A549 (cell line): ENCODE measurements at regions of chr19 and their contacts with region 1.

Region 1: GRCh38 chr19:38402967-38403861 is at the start of gene FAM98C:
- DNase-seq: peak; percentile 99 to 100
- ATAC-seq: peak; percentile 93 to 98
- H3K4me3 ChIP-seq: peak within 1 kb of the TSS; percentile 66
- H3K27ac ChIP-seq: peak within 1 kb of the TSS; percentile 80 to 89
- H3K4me1 ChIP-seq: peaks cover 10% of the 10 kb centered on the region
- CTCF ChIP-seq: peak; percentile 100
- EP300 ChIP-seq: no peak
- POLR2A ChIP-seq: peak; percentile 72
- RAD21 ChIP-seq: peak; percentile 96 to 100
- polyA plus RNA-seq, gene FAM98C: 12.8 and 13.8 TPM in 2 replicates

Region 2: GRCh38 chr19:38162094-38162493 is 241.1 kb before region 1 on chr19:
- CTCF ChIA-PET with region 1: no interaction called
- POLR2A ChIA-PET with region 1: no interaction called
- DNase-seq: no peak
- ATAC-seq: no peak
- H3K4me3 ChIP-seq: no peak overlapping the region
- H3K27ac ChIP-seq: no peak overlapping the region
- H3K4me1 ChIP-seq: no peaks in the 10 kb centered on the region
- CTCF ChIP-seq: no peak
- EP300 ChIP-seq: no peak
- POLR2A ChIP-seq: no peak
- RAD21 ChIP-seq: no peak

Region 3: GRCh38 chr19:38216785-38217641 is 186.2 kb before region 1 on chr19:
- CTCF ChIA-PET with region 1: no interaction called
- POLR2A ChIA-PET with region 1: no interaction called
- DNase-seq: no peak
- ATAC-seq: 0 out of 6 replicates have a peak, but pooled peaks of 1 of the 2 experiments have one; percentile 1
- H3K4me3 ChIP-seq: no peak overlapping the region
- H3K27ac ChIP-seq: no peak overlapping the region
- H3K4me1 ChIP-seq: peaks cover 3% of the 10 kb centered on the region; the same call in 1 of the 3 replicates
- CTCF ChIP-seq: no peak
- EP300 ChIP-seq: no peak
- POLR2A ChIP-seq: no peak
- RAD21 ChIP-seq: no peak

Region 4: DNA sequence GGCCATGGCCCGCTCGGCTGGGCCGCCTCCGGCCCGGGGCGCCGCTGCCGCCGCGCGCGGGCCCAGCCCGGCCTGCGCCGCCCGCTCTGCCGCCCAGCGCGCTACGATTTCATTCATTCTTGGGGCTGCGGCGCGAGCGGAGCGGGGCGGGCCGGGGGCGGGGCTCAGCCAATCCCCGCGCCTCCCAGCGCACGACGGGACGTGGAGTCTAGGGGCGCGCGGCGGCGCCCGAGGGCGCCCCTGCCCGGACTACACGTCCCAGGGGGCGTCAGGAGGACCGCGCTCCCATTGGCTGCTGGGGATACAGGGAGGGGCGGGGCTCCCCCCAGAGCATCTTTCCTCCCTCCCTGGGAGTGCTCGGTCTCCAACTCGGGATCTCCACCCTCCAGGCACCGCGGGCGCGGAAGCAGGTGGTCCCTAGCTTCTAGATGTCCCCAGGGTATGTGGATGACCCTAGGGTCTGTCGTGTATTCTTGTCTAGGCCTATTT is 173.6 kb before region 1 on chr19:
- CTCF ChIA-PET with region 1: interaction called, 12 read pairs
- POLR2A ChIA-PET with region 1: no interaction called
- DNase-seq: peak; percentile 89 to 93
- ATAC-seq: peak; percentile 49 to 79
- H3K4me3 ChIP-seq: peak overlapping the region; percentile 52
- H3K27ac ChIP-seq: peak overlapping the region in 1 of 2 experiments; percentile 67; a peak in 3 of 6 replicates
- H3K4me1 ChIP-seq: peaks cover 25% of the 10 kb centered on the region
- CTCF ChIP-seq: no peak
- EP300 ChIP-seq: no peak
- POLR2A ChIP-seq: no peak
- RAD21 ChIP-seq: no peak

Region 5: DNA sequence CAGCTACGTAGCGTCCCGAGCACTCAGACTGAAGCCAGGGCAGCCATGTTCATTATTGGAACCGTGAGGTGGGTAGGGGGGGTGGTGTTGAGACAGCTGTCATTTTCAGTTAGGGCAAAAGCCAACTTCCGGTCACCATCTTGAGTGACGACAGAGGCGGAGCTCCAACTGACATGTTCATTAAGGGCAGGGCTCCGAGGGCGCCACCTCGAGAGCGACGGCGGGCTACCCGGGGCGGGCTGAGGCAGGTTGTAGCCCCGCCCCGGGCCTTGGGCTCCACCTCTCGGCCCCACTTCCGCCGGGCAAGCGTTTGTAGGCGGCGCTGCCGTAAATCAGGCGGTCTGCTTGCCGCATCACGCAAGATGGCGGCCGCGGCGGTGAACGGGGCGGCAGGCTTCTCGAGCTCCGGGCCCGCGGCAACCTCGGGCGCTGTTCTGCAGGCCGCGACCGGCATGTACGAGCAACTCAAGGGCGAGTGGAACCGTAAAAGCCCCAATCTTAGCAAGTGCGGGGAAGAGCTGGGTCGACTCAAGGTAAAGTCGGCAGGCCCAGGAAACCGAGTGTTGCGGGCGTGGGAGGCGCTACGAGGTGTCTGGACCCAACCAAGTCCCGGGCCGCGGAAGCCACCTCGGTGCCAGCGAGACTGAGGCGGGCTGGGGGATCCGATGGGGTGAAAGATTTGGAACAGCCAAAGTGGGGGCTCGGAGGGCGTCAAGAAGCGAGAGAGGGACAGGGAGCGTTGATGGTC is 28.6 kb before region 1 on chr19 and contains the start of gene PSMD8:
- CTCF ChIA-PET with region 1: interaction called, 23 read pairs
- POLR2A ChIA-PET with region 1: interaction called, 11 read pairs
- DNase-seq: peak; percentile 100
- ATAC-seq: peak; percentile 91 to 97
- H3K4me3 ChIP-seq: peak within 1 kb of the TSS; percentile 78
- H3K27ac ChIP-seq: peak within 1 kb of the TSS; percentile 88 to 91
- H3K4me1 ChIP-seq: peaks cover 17% of the 10 kb centered on the region
- CTCF ChIP-seq: peak; percentile 40
- EP300 ChIP-seq: no peak
- POLR2A ChIP-seq: peak; percentile 100
- RAD21 ChIP-seq: peak in 1 of 2 experiments; percentile 35; a peak in 3 of 5 replicates
- polyA plus RNA-seq, gene PSMD8: 437 and 469 TPM in 2 replicates

Region 6: GRCh38 chr19:38470788-38471480 is 67.7 kb after region 1 on chr19:
- CTCF ChIA-PET with region 1: interaction called, 16 read pairs
- POLR2A ChIA-PET with region 1: no interaction called
- DNase-seq: no peak
- ATAC-seq: peak in 1 of 2 experiments; percentile 14; a peak in 2 of 6 replicates
- H3K4me3 ChIP-seq: no peak overlapping the region
- H3K27ac ChIP-seq: no peak overlapping the region
- H3K4me1 ChIP-seq: no peaks in the 10 kb centered on the region
- CTCF ChIP-seq: no peak
- EP300 ChIP-seq: no peak
- POLR2A ChIP-seq: no peak
- RAD21 ChIP-seq: no peak

Region 7: DNA sequence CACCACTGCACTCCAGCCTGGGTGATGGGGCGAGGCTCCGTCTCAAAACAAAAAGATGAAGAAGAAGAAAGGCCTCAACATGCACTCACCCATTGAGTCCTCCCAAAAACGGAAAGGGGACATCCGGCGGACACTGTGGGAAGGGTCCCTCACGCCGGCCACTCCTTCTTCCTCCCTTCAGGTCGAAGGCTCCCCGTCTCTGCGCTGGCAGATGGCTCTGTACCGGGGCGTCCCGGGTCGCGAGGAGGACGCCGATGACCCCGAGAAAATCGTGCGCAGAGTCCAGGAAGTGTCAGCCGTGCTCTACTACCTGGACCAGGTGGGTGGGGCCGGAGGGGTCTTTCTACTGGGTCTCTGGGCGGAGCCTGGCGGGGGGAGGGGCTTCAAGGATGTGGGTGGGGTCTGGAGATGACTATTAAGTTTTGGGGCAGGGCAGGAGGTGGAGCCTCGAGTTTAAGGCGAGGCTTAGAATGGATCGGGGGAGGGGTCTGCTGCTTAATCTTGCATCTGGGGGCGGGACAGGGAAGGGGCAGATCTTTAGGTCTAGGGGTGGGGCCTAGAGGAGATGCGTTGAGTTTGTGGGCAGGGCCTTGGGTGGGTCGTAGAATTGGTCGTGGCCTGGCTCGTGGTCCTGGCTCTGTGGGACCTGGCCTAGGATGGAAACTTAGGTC is 124.4 kb after region 1 on chr19:
- CTCF ChIA-PET with region 1: interaction called, 10 read pairs
- POLR2A ChIA-PET with region 1: no interaction called
- DNase-seq: peak in 1 of 2 experiments; percentile 55
- ATAC-seq: peak in 1 of 2 experiments; percentile 12; a peak in 3 of 6 replicates
- H3K4me3 ChIP-seq: no peak overlapping the region
- H3K27ac ChIP-seq: peak overlapping the region in 1 of 2 experiments; percentile 0; a peak in 1 of 6 replicates
- H3K4me1 ChIP-seq: peaks cover 5% of the 10 kb centered on the region; the same call in 2 of the 3 replicates
- CTCF ChIP-seq: no peak
- EP300 ChIP-seq: no peak
- POLR2A ChIP-seq: no peak
- RAD21 ChIP-seq: no peak

Region 8: GRCh38 chr19:38626401-38626800 is 223.2 kb after region 1 on chr19:
- CTCF ChIA-PET with region 1: interaction called, 12 read pairs
- POLR2A ChIA-PET with region 1: no interaction called
- DNase-seq: no peak
- ATAC-seq: no peak
- H3K4me3 ChIP-seq: no peak overlapping the region
- H3K27ac ChIP-seq: no peak overlapping the region
- H3K4me1 ChIP-seq: peaks cover 23% of the 10 kb centered on the region
- CTCF ChIP-seq: no peak
- EP300 ChIP-seq: no peak
- POLR2A ChIP-seq: no peak
- RAD21 ChIP-seq: no peak

Region 9: DNA sequence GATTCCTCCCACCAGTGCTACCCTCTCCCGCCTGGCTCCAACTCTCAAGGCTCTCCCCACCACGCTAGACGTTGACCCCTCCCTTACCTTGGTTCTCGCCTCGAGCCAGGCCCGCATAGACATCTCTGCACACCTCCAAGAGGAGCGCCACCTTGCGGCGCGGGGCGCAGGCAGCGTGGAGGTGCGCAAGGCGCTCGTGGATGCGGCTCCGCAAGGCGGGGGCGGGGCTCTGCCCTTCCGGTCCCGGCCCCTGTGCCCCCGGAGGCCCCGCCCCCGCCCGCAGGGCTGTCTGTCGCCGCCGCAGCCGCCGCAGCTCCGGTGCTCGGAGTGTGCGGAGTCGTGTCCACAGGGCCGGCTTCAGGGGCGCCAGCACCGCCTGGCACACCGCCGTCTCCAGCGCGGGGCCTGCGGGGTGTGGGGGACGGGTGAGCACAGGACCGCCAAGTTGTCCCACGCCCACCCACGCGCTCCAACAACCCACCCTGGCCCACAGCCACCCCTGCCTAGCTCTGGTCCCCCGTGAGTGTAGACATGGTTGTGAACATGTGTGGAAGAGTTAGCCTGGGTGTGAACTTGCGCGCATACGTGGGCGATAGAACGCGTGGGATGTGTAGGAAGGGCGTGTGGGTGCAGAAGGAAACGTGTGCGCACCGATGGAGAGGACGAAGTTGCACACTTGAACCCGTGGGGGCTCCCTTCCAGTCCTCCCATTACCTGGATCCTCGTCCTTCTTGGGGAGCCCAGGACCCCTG is 466.8 kb after region 1 on chr19:
- CTCF ChIA-PET with region 1: interaction called, 17 read pairs
- POLR2A ChIA-PET with region 1: no interaction called
- DNase-seq: peak; percentile 89 to 93
- ATAC-seq: peak; percentile 90 to 94
- H3K4me3 ChIP-seq: peak overlapping the region; percentile 31
- H3K27ac ChIP-seq: peak overlapping the region; percentile 56 to 80
- H3K4me1 ChIP-seq: peaks cover 18% of the 10 kb centered on the region
- CTCF ChIP-seq: peak; percentile 99
- EP300 ChIP-seq: no peak
- POLR2A ChIP-seq: no peak; the same call in 1 of the 2 replicates
- RAD21 ChIP-seq: peak; percentile 73 to 88

Region 10: DNA sequence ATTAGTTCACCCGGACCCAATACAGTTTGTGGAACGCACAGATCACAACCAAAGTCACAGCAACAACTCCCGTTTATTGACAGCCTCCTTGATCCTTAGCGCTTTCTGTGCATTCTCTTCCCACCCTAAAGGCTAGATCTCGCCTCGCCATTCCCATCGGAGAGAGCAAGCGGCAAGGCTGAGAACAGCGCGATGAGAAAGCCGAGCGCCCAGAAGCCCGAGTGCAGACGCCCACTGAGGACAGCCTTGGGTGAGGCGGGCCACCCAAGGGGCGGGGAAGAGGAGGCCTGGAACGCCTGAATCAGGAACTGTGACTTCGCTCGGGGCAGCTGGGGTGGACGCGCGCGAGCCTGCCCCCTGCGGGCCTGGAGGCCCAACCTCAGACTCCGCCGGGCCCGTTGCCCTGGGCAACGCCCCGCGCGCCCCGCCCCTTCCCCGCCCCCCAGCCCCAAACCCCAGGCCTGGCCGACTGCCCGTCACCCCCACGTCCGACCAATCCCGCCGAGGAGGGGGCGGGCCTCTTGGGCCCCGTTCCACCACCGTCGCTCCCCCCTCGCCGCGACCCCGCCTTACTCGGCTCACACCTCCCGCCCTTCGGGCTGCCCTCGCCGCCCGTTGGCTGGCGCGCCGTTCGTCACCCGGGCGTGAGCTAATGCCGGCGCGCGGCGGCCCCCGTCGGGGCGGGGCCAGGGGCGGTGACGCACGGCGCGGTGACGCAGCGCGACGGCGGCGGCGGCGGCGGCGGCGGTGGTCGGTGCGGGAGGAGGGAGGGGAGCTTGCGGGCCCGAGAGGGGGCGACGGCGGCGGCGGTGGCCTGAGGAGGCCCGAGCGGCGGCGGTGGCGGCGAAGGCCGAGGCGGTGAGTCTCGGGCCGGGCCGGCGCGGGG is 938.7 kb after region 1 on chr19 and contains the start of gene SAMD4B:
- CTCF ChIA-PET with region 1: no interaction called
- POLR2A ChIA-PET with region 1: no interaction called
- DNase-seq: peak; percentile 99 to 100
- ATAC-seq: peak; percentile 90 to 97
- H3K4me3 ChIP-seq: peak within 1 kb of the TSS; percentile 90
- H3K27ac ChIP-seq: peak within 1 kb of the TSS; percentile 85 to 94
- H3K4me1 ChIP-seq: peaks cover 22% of the 10 kb centered on the region
- CTCF ChIP-seq: peak; percentile 96
- EP300 ChIP-seq: peak in 1 of 2 experiments; percentile 9; a peak in 1 of 5 replicates
- POLR2A ChIP-seq: peak; percentile 97
- RAD21 ChIP-seq: peak; percentile 31 to 60; a peak in 4 of 5 replicates
- polyA plus RNA-seq, gene SAMD4B: 82.1 and 101 TPM in 2 replicates